Thyroid gland (tissue), 4 donors: ENCODE measurements at regions of chr17 and their contacts with region 1.

Region 1: DNA sequence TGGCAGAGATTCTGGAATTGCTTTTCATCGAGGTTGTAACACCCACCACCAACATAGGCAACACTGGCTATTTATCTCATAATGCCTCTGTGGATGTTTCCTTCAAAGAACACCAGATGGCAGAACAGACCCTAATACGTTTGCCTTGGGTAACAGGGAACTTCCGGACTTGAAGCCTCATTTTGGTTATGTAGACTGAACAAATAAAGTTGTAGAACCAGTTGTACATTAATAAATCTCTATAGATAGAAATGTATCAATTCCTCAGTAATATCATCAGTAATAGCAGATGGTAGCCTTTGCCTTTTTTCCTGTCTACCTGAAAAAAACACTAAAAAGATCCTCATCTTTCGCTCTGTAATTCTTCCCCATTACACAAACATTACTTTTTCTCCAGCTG is 25.9 kb upstream of the APOH start:
- DNase-seq: peak; percentile 4 to 8
- H3K4me3 ChIP-seq: no peak overlapping the region
- H3K27ac ChIP-seq: no peak overlapping the region
- H3K4me1 ChIP-seq: no peaks in the 10 kb centered on the region
- H3K27me3 ChIP-seq: no peaks in the 10 kb centered on the region
- CTCF ChIP-seq: peak in 4 of 6 experiments; percentile 72 to 89 (median 86)
- POLR2A ChIP-seq: no peak

Region 2: GRCh38 chr17:66317629-66318028 is 62.5 kb after region 1 on chr17:
- intact Hi-C with region 1: no loop called
- DNase-seq: no peak
- H3K4me3 ChIP-seq: no peak overlapping the region
- H3K27ac ChIP-seq: no peak overlapping the region
- H3K4me1 ChIP-seq: no peaks in the 10 kb centered on the region
- H3K27me3 ChIP-seq: no peaks in the 10 kb centered on the region
- CTCF ChIP-seq: no peak
- POLR2A ChIP-seq: no peak

Region 3: GRCh38 chr17:66567234-66568170 is 312.4 kb after region 1 on chr17:
- intact Hi-C with region 1: loop called (anchors 2 kb)
- DNase-seq: peak; percentile 84 to 85
- H3K4me3 ChIP-seq: no peak overlapping the region
- H3K27ac ChIP-seq: no peak overlapping the region
- H3K4me1 ChIP-seq: no peaks in the 10 kb centered on the region
- H3K27me3 ChIP-seq: no peaks in the 10 kb centered on the region
- CTCF ChIP-seq: peak; percentile 57 to 91 (median 80)
- POLR2A ChIP-seq: no peak

Region 4: GRCh38 chr17:66673668-66674315 is 418.7 kb after region 1 on chr17:
- intact Hi-C with region 1: loop called (anchors 10 kb)
- DNase-seq: peak; percentile 26 to 42
- H3K4me3 ChIP-seq: no peak overlapping the region
- H3K27ac ChIP-seq: no peak overlapping the region
- H3K4me1 ChIP-seq: no peaks in the 10 kb centered on the region
- H3K27me3 ChIP-seq: no peaks in the 10 kb centered on the region
- CTCF ChIP-seq: peak in 5 of 6 experiments; percentile 45 to 72 (median 69)
- POLR2A ChIP-seq: no peak